Activated T-helper 2 cell treated with anti-CD3 and anti-CD28 coated beads, Interferon-gamma antibody, Interleukin-2, Interleukin-4, amounts not matched to agents 10 μg/mL and 5 μg/mL and 100 μg/mL, durations not matched to agents 14 hours and 24 hours and 36 hours (primary cell): ENCODE measurements at regions of chr10 and their contacts with region 1.

Region 1: GRCh38 chr10:62851442-62851841 is 35.3 kb upstream of the EGR2 start:
- DNase-seq: no peak
- H3K4me3 Mint-ChIP-seq: no peak overlapping the region
- H3K27ac Mint-ChIP-seq: peak overlapping the region; percentile 28
- H3K4me1 Mint-ChIP-seq: peaks cover 59% of the 10 kb centered on the region
- H3K27me3 Mint-ChIP-seq: no peaks in the 10 kb centered on the region

Region 2: GRCh38 chr10:62399211-62399610 is 452.2 kb before region 1 on chr10:
- intact Hi-C with region 1: no loop called
- DNase-seq: no peak
- H3K4me3 Mint-ChIP-seq: no peak overlapping the region
- H3K27ac Mint-ChIP-seq: no peak overlapping the region
- H3K4me1 Mint-ChIP-seq: no peaks in the 10 kb centered on the region
- H3K27me3 Mint-ChIP-seq: peaks cover 37% of the 10 kb centered on the region

Region 3: GRCh38 chr10:62610649-62611229 is 240.7 kb before region 1 on chr10:
- intact Hi-C with region 1: loop called (anchors 1 kb)
- DNase-seq: peak; percentile 58
- H3K4me3 Mint-ChIP-seq: no peak overlapping the region
- H3K27ac Mint-ChIP-seq: no peak overlapping the region
- H3K4me1 Mint-ChIP-seq: peaks cover 52% of the 10 kb centered on the region
- H3K27me3 Mint-ChIP-seq: peaks cover 5% of the 10 kb centered on the region

Region 4: DNA sequence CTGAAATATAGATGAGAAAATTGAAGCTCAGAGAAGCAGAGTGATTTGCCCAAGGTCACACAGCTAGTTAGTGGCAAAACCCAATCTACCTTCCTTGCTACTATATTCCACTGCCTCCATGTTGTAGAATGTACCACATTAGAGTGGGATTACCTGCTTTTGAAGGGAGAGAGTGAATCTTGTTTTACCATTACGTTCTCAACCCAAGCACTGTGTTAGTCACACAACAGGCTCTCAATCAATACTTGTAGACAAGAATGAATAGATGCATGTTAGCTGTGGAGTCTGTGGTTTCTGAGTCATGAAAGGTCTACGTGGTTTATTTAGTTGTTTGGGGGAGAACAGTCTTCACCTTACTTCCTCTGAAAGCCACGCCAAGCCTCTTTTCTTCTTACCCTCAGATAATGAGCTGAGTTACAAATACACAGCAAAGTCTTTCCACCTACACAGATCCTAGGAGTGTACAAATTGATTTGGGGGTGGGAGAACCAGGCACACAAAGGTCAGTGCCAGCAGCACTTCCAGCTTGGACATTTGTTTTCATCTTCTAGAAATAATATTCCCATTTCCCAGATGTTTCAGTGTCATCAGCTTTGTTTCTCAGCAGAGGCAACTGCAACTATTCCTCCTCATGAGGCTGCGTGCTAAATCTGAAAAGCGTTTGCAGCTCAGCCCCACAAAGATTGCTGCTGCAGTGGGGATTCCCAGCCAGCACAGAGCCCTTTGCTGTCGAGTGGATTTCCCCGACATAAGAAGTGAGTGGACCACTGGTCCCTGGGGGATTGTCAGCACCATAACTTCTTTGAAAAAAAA is 118.4 kb before region 1 on chr10:
- intact Hi-C with region 1: loop called (anchors 1 kb)
- DNase-seq: peak; percentile 51
- H3K4me3 Mint-ChIP-seq: peak overlapping the region; percentile 56
- H3K27ac Mint-ChIP-seq: no peak overlapping the region
- H3K4me1 Mint-ChIP-seq: peaks cover 23% of the 10 kb centered on the region
- H3K27me3 Mint-ChIP-seq: no peaks in the 10 kb centered on the region

Region 5: GRCh38 chr10:63068246-63068645 is 216.8 kb after region 1 on chr10:
- intact Hi-C with region 1: loop called (anchors 1 kb)
- DNase-seq: no peak
- H3K4me3 Mint-ChIP-seq: no peak overlapping the region
- H3K27ac Mint-ChIP-seq: peak overlapping the region; percentile 75
- H3K4me1 Mint-ChIP-seq: peaks cover 51% of the 10 kb centered on the region
- H3K27me3 Mint-ChIP-seq: peaks cover 3% of the 10 kb centered on the region

Region 6: GRCh38 chr10:63173468-63174232 is 322.2 kb after region 1 on chr10:
- intact Hi-C with region 1: loop called (anchors 5 kb)
- DNase-seq: no peak
- H3K4me3 Mint-ChIP-seq: no peak overlapping the region
- H3K27ac Mint-ChIP-seq: peak overlapping the region; percentile 29
- H3K4me1 Mint-ChIP-seq: peaks cover 55% of the 10 kb centered on the region
- H3K27me3 Mint-ChIP-seq: no peaks in the 10 kb centered on the region